Posterior vena cava (tissue), 2 donors: ENCODE measurements at regions of chr5 and their contacts with region 1.

Region 1: DNA sequence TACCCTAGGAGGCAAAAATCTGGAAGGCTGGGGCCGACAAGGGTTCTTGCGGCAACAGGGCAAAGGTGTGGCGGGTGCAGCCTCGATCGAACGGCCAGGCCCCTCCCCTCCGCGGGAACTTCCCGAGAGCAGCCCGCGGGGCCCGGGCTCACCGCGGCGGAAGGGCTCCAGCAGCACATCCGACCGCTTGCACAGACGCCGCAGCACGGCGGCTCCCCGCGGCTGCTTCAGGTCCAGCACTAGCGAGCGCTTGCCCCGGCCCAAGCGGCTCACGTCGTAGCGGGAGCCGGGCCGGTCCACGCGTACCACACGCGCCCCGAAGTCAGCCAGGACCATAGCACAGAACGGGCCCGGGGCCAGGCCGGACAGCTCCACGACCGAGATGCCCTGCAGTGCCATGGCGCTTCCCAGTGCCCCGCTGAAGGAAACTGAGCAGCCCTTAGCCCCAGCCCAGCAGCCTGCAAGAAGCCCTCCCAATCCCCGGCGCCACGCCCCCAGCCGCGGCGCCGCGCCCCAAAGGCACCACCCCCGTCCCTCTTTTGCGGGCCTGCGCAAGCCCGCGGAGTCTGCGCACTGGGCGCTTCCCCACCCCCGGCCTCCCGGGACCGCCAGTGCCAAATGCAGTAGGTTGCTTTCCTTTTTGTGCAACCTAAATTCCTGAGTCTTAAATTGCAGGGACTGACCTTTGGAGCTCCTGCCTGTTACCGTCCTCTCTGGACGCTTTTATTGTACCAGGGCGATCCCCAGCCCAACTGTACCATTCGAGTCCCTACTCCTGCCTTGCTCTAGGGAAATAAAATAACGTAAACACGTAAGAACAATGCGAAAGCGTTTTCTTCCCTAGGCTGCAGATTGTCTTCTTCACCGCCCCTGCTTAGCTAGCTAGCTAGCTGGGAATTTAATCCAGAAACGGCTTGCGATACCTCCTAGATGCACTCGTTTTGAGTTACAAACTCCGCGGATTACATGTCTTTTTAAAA is at the start of gene AMACR:
- DNase-seq: peak; percentile 96
- total RNA-seq, gene AMACR: 6.4 to 9.4 TPM

Region 2: GRCh38 chr5:34547300-34548085 is 539.6 kb after region 1 on chr5:
- intact Hi-C with region 1: loop called in 1 of 2 experiments (anchors 10 kb)
- DNase-seq: no peak